Endothelial cell of umbilical vein (primary cell): ENCODE measurements at regions of chrX and their contacts with region 1.

Region 1: GRCh38 chrX:15854712-15855567 is at the start of gene AP1S2:
- DNase-seq: peak; percentile 95
- H3K4me3 ChIP-seq: peak within 1 kb of the TSS; percentile 17 to 84 (median 79)
- H3K27ac ChIP-seq: peak within 1 kb of the TSS; percentile 21
- H3K4me1 ChIP-seq: peaks cover 14% of the 10 kb centered on the region
- H3K27me3 ChIP-seq: no peaks in the 10 kb centered on the region
- CTCF ChIP-seq: no peak
- POLR2A ChIP-seq: no peak
- total RNA-seq, gene AP1S2: 25.0 and 37.3 TPM in 2 replicates

Region 2: GRCh38 chrX:15915959-15916703 is 61.2 kb after region 1 on chrX:
- CTCF ChIA-PET with region 1: no interaction called
- POLR2A ChIA-PET with region 1: no interaction called
- dilution Hi-C with region 1: no loop called
- intact Hi-C with region 1: loop called (anchors 2 kb)
- DNase-seq: no peak
- H3K4me3 ChIP-seq: no peak overlapping the region
- H3K27ac ChIP-seq: peak overlapping the region; percentile 34
- H3K4me1 ChIP-seq: peaks cover 15% of the 10 kb centered on the region
- H3K27me3 ChIP-seq: peaks cover 2% of the 10 kb centered on the region in 2 experiments
- CTCF ChIP-seq: no peak
- POLR2A ChIP-seq: no peak

Region 3: DNA sequence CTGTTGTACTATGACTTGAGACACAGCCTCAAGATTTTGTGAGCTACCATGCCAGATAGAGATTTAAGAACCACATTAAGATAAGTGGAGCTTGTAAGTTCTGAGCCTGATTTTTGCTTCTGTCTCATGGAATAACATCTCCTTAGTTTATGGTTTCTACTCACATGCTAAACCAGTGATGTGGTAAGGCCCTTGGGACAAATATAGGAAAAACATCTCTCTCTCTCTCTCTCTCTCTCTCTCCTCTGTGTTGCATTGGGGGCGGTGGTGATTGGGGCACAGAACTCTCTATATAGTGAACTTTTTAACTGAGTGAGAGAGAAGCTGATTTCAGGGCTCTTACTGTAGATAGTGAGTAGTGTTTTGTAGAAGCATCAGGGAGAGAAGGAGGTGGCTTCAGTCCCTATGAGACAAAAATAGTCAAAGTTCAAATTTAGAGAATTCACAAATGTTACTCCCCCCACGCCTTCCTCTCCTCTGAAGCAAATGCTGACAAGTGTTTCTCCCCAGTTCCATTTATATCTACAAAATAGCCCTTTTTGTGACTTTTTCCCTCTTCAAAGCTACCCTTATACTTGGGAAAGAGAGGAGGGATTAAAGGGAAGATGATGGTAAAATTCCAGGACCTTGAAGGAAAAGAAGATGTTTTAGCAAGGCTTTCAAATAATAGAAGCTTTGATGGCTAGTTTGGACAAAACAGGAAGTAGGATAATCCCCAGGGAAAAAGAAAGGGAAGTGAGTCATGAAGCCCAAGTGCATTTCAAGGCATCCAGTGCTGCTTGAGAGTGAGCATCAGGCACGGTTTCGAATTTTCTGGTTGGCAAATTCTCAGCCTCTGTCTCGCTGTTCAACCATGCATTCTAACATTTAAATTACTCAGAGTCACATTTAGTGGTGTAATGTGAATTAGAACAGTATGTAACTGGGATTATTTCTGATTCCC is 134.0 kb after region 1 on chrX:
- CTCF ChIA-PET with region 1: no interaction called
- POLR2A ChIA-PET with region 1: no interaction called
- dilution Hi-C with region 1: no loop called
- intact Hi-C with region 1: loop called (anchors 1 kb)
- DNase-seq: peak; percentile 74
- H3K4me3 ChIP-seq: no peak overlapping the region
- H3K27ac ChIP-seq: peak overlapping the region; percentile 75
- H3K4me1 ChIP-seq: peaks cover 17% of the 10 kb centered on the region
- H3K27me3 ChIP-seq: no peaks in the 10 kb centered on the region
- CTCF ChIP-seq: no peak
- POLR2A ChIP-seq: peak; percentile 15

Region 4: DNA sequence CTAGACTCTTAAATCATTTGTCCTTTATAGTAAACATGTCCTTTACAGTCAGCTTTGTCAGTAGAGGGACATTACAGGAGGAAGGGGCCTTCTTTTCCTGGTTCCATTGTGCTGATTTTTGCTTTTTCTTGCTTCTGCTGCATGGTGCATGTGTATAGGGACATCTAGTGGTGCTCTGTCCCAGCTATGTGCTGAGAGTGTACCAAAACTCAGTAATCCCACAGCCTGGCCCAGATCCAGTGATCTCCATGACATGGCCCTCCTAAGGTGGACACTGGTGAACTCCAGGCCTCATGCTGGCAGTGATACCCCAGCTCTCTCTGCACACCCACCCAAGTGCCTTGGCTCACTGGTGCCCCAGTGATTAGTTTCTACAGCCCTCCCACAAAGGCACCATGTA is 357.5 kb after region 1 on chrX:
- CTCF ChIA-PET with region 1: interaction called, 19 read pairs
- POLR2A ChIA-PET with region 1: no interaction called
- dilution Hi-C with region 1: no loop called
- intact Hi-C with region 1: loop called (anchors 10 kb)
- DNase-seq: peak; percentile 35
- H3K4me3 ChIP-seq: no peak overlapping the region
- H3K27ac ChIP-seq: no peak overlapping the region
- H3K4me1 ChIP-seq: no peaks in the 10 kb centered on the region
- H3K27me3 ChIP-seq: no peaks in the 10 kb centered on the region
- CTCF ChIP-seq: peak; percentile 28 to 37
- POLR2A ChIP-seq: no peak